ENCODE measurements at regions of chr11 and their contacts with region 1.

Region 1: GRCh38 chr11:86671682-86672621 is at the start of gene ME3:
- H3K4me3 Mint-ChIP-seq: peak within 1 kb of the TSS; percentile 85
- H3K27ac Mint-ChIP-seq: peak within 1 kb of the TSS; percentile 55
- H3K4me1 Mint-ChIP-seq: peaks cover 33% of the 10 kb centered on the region
- H3K27me3 Mint-ChIP-seq: peaks cover 53% of the 10 kb centered on the region

Region 2: DNA sequence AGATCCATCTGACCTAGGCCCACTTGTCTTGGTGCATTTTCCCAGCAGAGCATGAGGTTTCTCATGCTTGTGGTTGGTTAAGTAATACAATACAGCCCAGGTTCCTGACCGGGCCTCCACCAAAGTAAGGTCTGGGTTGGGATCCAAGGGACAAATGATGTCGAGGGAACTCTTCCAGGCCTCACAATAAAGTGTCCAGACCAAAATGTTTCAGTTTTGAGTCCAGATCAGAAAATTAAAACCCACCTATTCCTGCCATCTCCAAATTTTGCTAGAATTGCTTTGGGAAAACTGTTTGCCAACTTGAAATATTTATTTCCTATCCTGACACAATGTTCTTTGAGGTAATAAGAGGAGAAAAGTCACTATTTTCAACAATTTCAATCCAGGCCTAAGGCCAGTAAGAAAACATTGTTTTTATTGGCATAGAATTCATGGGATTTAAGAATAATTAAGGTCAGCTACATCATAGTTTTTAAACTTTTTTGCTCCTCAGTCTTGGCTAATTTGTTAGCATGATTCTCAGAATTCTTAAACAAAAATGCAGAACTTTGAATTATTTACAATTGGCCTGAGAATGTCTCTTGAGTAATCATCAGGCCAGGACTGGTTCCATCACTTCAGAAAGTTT is 50.9 kb before region 1 on chr11:
- intact Hi-C with region 1: no loop called
- H3K4me3 Mint-ChIP-seq: no peak overlapping the region
- H3K27ac Mint-ChIP-seq: no peak overlapping the region
- H3K4me1 Mint-ChIP-seq: no peaks in the 10 kb centered on the region
- H3K27me3 Mint-ChIP-seq: no peaks in the 10 kb centered on the region

Region 3: GRCh38 chr11:86740709-86741483 is 68.9 kb after region 1 on chr11:
- intact Hi-C with region 1: loop called (anchors 10 kb)
- H3K4me3 Mint-ChIP-seq: no peak overlapping the region
- H3K27ac Mint-ChIP-seq: peak overlapping the region; percentile 89
- H3K4me1 Mint-ChIP-seq: peaks cover 78% of the 10 kb centered on the region
- H3K27me3 Mint-ChIP-seq: no peaks in the 10 kb centered on the region

Region 4: DNA sequence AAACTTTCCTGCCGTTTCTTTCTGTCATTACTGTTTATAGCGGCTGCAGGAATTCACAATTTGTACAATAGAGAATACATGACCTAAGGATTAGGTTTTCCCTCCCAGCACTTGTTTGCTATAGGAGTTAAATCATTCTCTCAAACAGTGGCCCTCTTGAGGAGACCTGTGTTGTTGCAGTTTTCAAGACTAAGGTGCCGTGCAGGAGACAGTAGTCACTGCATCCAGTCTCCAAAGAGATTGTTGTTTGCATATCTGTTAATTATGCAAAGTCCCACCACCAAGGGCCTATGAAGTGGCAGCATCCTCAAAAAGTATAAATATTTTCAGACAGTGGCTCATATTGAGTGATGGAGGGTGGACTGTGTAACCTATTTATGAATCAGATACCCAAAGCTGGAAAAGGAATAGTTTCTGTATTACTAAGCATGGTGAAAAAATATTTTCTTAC is 130.7 kb after region 1 on chr11:
- intact Hi-C with region 1: loop called (anchors 5 kb)
- H3K4me3 Mint-ChIP-seq: no peak overlapping the region
- H3K27ac Mint-ChIP-seq: no peak overlapping the region
- H3K4me1 Mint-ChIP-seq: peaks cover 38% of the 10 kb centered on the region
- H3K27me3 Mint-ChIP-seq: peaks cover 48% of the 10 kb centered on the region

Measured in dendritic cell treated with granulocyte-macrophage colony-stimulating factor and Interleukin-4, amounts not matched to agents 40 ng/mL and 50 ng/mL, for 4 days (primary cell).